ENCODE measurements at regions of chr7 and their contacts with region 1.

Region 1: GRCh38 chr7:156907656-156908055 is 14.7 kb upstream of the LMBR1 start:
- DNase-seq: no peak
- H3K4me3 ChIP-seq: no peak overlapping the region
- H3K4me3 Mint-ChIP-seq: no peak overlapping the region
- H3K27ac Mint-ChIP-seq: no peak overlapping the region
- H3K4me1 ChIP-seq: no peaks in the 10 kb centered on the region
- H3K4me1 Mint-ChIP-seq: peaks cover 8% of the 10 kb centered on the region
- H3K27me3 ChIP-seq: no peaks in the 10 kb centered on the region
- H3K27me3 Mint-ChIP-seq: no peaks in the 10 kb centered on the region
- CTCF ChIP-seq: no peak

Region 2: GRCh38 chr7:156836443-156836842 is 71.2 kb before region 1 on chr7:
- CTCF ChIA-PET with region 1: no interaction called
- POLR2A ChIA-PET with region 1: no interaction called
- intact Hi-C with region 1: no loop called
- DNase-seq: no peak
- H3K4me3 ChIP-seq: no peak overlapping the region
- H3K4me3 Mint-ChIP-seq: no peak overlapping the region
- H3K27ac Mint-ChIP-seq: no peak overlapping the region
- H3K4me1 ChIP-seq: no peaks in the 10 kb centered on the region; the same call in none of the 2 replicates
- H3K4me1 Mint-ChIP-seq: peaks cover 11% of the 10 kb centered on the region
- H3K27me3 ChIP-seq: no peaks in the 10 kb centered on the region
- H3K27me3 Mint-ChIP-seq: no peaks in the 10 kb centered on the region
- CTCF ChIP-seq: no peak

Region 3: GRCh38 chr7:156947122-156947843 is 39.6 kb after region 1 on chr7:
- CTCF ChIA-PET with region 1: no interaction called
- POLR2A ChIA-PET with region 1: no interaction called
- intact Hi-C with region 1: loop called (anchors 2 kb)
- DNase-seq: no peak
- H3K4me3 ChIP-seq: no peak overlapping the region
- H3K4me3 Mint-ChIP-seq: no peak overlapping the region
- H3K27ac Mint-ChIP-seq: no peak overlapping the region
- H3K4me1 ChIP-seq: peaks cover 4% of the 10 kb centered on the region
- H3K4me1 Mint-ChIP-seq: peaks cover 20% of the 10 kb centered on the region
- H3K27me3 ChIP-seq: no peaks in the 10 kb centered on the region
- H3K27me3 Mint-ChIP-seq: peaks cover 8% of the 10 kb centered on the region
- CTCF ChIP-seq: no peak

Region 4: GRCh38 chr7:157250605-157251228 is 343.1 kb after region 1 on chr7:
- CTCF ChIA-PET with region 1: no interaction called
- POLR2A ChIA-PET with region 1: no interaction called
- intact Hi-C with region 1: loop called (anchors 1 kb)
- DNase-seq: peak; percentile 66 to 72
- H3K4me3 ChIP-seq: no peak overlapping the region
- H3K4me3 Mint-ChIP-seq: no peak overlapping the region
- H3K27ac Mint-ChIP-seq: no peak overlapping the region
- H3K4me1 ChIP-seq: peaks cover 10% of the 10 kb centered on the region
- H3K4me1 Mint-ChIP-seq: no peaks in the 10 kb centered on the region
- H3K27me3 ChIP-seq: no peaks in the 10 kb centered on the region
- H3K27me3 Mint-ChIP-seq: no peaks in the 10 kb centered on the region
- CTCF ChIP-seq: peak; percentile 71 to 82